ENCODE measurements at regions of chr1 and their contacts with region 1.

Region 1: DNA sequence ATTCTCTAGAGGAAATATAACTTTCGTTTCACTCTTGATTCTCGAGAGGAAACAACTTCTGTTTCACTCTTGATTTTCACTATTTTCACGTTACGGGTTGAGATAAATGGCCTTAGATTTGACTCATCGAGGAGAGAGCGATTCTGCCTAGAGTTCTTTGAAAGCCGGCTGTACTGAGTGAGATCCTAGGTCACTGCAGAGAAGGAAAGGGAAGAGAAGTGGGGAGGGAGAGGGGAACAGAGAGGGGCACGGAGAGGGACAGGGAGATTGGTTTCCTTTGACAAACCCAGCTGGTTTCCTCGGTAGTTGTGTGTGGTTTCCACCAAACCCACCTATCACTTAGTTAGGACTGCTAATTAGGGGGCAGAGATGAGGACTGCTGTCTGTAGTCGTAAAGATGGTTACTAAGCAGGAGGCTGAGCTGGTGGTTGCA is 21.6 kb upstream of the GPR137B start:
- DNase-seq: no peak
- H3K4me3 Mint-ChIP-seq: peak overlapping the region; percentile 57
- H3K27ac Mint-ChIP-seq: peak overlapping the region; percentile 36
- H3K4me1 Mint-ChIP-seq: peaks cover 28% of the 10 kb centered on the region
- H3K27me3 Mint-ChIP-seq: peaks cover 15% of the 10 kb centered on the region

Region 2: DNA sequence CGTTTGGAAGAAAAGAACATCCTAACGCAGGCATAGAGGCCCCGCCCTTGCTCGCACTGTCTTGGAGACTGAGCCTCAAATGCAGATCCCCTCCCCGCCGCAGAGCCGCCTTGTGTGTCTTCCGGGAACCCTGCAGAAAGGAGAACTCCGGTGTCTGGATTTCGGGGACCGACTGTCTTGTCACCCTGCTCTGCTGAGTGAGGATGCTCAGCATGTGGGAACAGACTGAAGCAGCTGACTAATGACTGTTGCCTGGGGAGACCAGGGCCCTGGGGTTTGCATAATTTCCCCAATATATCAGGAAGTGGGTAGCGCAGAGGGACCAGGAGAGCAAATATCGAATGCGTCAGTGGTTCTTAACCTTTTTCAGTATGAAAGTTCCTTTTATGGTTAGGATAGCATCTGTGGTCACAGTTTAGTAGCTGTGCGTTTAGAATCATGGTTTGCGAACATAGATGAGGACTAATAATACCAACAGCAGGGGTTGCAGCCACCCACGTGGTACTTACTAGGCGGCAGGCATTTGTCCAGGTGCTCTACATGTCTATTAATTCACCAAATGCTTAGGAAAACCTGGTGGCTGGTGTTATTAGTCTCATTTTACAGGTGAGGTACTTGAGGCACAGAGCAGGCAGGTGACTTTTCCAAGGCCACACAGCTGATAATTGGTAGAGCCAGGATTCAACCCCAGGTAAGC is 35.9 kb after region 1 on chr1:
- intact Hi-C with region 1: no loop called
- DNase-seq: no peak
- H3K4me3 Mint-ChIP-seq: no peak overlapping the region
- H3K27ac Mint-ChIP-seq: no peak overlapping the region
- H3K4me1 Mint-ChIP-seq: peaks cover 4% of the 10 kb centered on the region
- H3K27me3 Mint-ChIP-seq: peaks cover 1% of the 10 kb centered on the region

Region 3: GRCh38 chr1:236214761-236215160 is 94.0 kb after region 1 on chr1:
- intact Hi-C with region 1: loop called (anchors 5 kb)
- DNase-seq: no peak
- H3K4me3 Mint-ChIP-seq: no peak overlapping the region
- H3K27ac Mint-ChIP-seq: no peak overlapping the region
- H3K4me1 Mint-ChIP-seq: no peaks in the 10 kb centered on the region
- H3K27me3 Mint-ChIP-seq: no peaks in the 10 kb centered on the region

Region 4: GRCh38 chr1:236523701-236524141 is 403.0 kb after region 1 on chr1 and contains the start of gene LGALS8:
- intact Hi-C with region 1: loop called (anchors 5 kb)
- DNase-seq: peak; percentile 78
- H3K4me3 Mint-ChIP-seq: peak within 1 kb of the TSS; percentile 99
- H3K27ac Mint-ChIP-seq: peak within 1 kb of the TSS; percentile 100
- H3K4me1 Mint-ChIP-seq: peaks cover 36% of the 10 kb centered on the region
- H3K27me3 Mint-ChIP-seq: no peaks in the 10 kb centered on the region
- total RNA-seq, gene LGALS8: 56.6 and 66.2 TPM in 2 replicates